MCF 10A (cell line): ENCODE measurements at regions of chr6 and their contacts with region 1.

Region 1: GRCh38 chr6:142112451-142113061 is 20.2 kb upstream of the GJE1 start:
- DNase-seq: peak; percentile 81
- H3K4me3 Mint-ChIP-seq: no peak overlapping the region
- H3K27ac Mint-ChIP-seq: no peak overlapping the region
- H3K4me1 Mint-ChIP-seq: no peaks in the 10 kb centered on the region
- H3K27me3 Mint-ChIP-seq: peaks cover 12% of the 10 kb centered on the region
- CTCF ChIP-seq: peak; percentile 65

Region 2: GRCh38 chr6:141641406-141641805 is 471.1 kb before region 1 on chr6:
- CTCF ChIA-PET with region 1: no interaction called
- POLR2A ChIA-PET with region 1: no interaction called
- intact Hi-C with region 1: loop called (anchors 1 kb)
- DNase-seq: no peak
- H3K4me3 Mint-ChIP-seq: no peak overlapping the region
- H3K27ac Mint-ChIP-seq: no peak overlapping the region
- H3K4me1 Mint-ChIP-seq: no peaks in the 10 kb centered on the region
- H3K27me3 Mint-ChIP-seq: peaks cover 4% of the 10 kb centered on the region
- CTCF ChIP-seq: no peak

Region 3: DNA sequence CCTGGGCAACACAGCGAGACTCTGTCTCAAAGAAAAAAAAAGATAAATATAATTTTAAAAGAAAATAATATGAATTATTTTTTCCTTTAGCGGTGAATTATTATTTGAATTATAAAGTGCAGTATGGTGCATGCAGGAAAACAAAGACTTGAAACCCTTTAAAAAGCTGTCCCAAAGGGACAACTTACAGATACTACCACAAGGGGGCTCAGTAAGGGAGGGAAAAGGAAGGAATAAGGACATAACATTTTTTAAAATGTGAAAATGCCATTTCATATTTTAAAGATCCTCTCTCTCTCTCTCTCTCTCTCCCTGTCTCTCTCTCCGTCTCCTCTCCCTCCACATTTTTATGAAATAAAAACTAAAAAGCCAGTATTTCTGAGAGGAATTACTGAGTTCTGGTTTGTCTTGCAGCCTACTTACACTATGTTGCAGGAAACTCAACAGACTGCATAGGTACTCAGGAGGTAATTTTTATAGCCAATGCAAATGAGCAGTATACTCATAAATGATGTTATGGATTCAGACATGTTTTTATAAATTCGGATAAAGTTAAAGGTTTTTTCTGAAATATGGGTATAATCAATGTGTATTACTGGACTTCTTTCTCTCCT is 434.9 kb before region 1 on chr6:
- CTCF ChIA-PET with region 1: interaction called, 5 read pairs
- POLR2A ChIA-PET with region 1: no interaction called
- intact Hi-C with region 1: loop called (anchors 1 kb)
- DNase-seq: peak; percentile 68
- H3K4me3 Mint-ChIP-seq: no peak overlapping the region
- H3K27ac Mint-ChIP-seq: no peak overlapping the region
- H3K4me1 Mint-ChIP-seq: peaks cover 6% of the 10 kb centered on the region
- H3K27me3 Mint-ChIP-seq: peaks cover 27% of the 10 kb centered on the region
- CTCF ChIP-seq: peak; percentile 48

Region 4: DNA sequence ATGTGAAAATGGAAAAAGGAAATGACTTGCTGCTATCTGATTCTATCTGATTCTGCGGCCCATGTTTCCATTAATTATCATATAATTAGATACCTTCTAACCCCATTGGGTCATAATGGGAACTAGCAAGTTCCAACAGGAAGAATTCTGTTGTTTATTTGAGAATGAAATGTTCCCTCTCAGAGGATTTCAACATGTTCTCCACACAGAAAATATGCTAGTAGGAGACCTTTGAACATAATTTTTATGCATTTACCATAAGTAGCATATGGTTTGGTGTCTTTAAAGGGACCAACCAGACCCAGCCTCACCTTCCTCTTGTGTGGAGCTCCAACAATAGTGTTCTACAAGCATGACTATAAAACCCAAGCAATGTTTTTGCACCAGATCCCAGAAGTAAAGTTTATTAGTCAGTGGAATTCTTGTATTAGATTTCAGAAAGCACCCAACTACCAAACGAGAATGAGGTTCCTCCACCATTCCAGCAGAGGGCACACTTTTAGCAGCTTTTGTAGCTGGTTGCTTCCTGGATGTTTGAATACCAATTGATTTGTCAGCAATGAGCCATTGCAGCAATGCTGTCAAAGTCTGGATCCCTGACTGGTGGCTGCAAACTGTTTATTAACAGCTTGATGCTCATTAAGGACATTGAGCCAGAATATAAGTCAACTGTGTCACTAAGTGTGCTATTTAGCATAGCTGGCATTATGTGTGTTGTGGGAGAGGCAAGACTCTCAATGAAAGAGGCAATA is 123.4 kb before region 1 on chr6:
- CTCF ChIA-PET with region 1: interaction called, 31 read pairs
- POLR2A ChIA-PET with region 1: no interaction called
- intact Hi-C with region 1: loop called (anchors 1 kb)
- DNase-seq: peak; percentile 84
- H3K4me3 Mint-ChIP-seq: no peak overlapping the region
- H3K27ac Mint-ChIP-seq: no peak overlapping the region
- H3K4me1 Mint-ChIP-seq: no peaks in the 10 kb centered on the region
- H3K27me3 Mint-ChIP-seq: peaks cover 11% of the 10 kb centered on the region
- CTCF ChIP-seq: peak; percentile 75

Region 5: DNA sequence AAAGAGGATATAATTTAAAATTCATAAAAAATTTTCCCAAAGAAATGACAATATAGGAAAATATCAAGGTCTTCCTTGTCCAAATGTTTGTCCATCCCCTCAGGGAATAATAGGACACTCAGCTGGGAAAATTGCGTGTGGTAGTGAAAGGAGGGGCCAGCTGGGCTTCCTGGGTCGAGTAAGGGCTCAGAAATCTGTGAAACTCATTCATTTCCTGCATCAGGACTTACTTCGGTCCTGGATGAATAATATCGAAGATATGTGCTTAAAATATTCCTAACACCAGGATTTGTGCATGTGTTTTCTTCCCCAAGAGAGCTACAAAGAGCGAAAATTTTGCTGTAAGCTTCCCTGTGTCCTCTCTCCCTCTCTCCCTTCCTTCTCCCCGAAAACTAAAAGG is 98.0 kb before region 1 on chr6:
- CTCF ChIA-PET with region 1: no interaction called
- POLR2A ChIA-PET with region 1: no interaction called
- intact Hi-C with region 1: no loop called
- DNase-seq: peak; percentile 83
- H3K4me3 Mint-ChIP-seq: peak overlapping the region; percentile 15
- H3K27ac Mint-ChIP-seq: peak overlapping the region; percentile 52
- H3K4me1 Mint-ChIP-seq: peaks cover 33% of the 10 kb centered on the region
- H3K27me3 Mint-ChIP-seq: no peaks in the 10 kb centered on the region
- CTCF ChIP-seq: no peak